ENCODE measurements at regions of chr1 and their contacts with region 1.

Region 1: GRCh38 chr1:112803906-112804762 is 89.0 kb upstream of the PPM1J start:
- DNase-seq: peak; percentile 78
- H3K4me3 Mint-ChIP-seq: no peak overlapping the region
- H3K27ac Mint-ChIP-seq: no peak overlapping the region
- H3K4me1 Mint-ChIP-seq: peaks cover 3% of the 10 kb centered on the region
- H3K27me3 Mint-ChIP-seq: no peaks in the 10 kb centered on the region
- CTCF ChIP-seq: peak; percentile 84

Region 2: DNA sequence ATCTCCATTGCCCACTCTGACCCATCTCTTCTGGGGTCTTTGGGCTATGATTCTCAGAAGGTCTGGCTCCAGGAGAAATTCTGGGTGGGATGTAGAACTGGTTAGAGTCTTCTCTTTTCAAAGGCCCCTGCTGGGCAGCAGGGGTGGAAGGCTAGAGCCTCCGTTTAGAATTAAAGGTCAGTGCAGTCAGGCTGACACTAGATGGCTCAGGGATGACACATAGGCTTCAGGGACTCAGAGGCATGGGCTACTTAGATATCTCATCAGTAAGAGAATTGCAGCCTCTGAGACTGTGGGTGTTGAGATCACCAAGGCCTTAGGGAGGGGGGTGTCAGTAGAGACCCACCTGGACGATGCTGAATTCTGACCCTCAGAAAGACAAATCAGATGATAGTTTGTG is 76.4 kb before region 1 on chr1:
- CTCF ChIA-PET with region 1: interaction called, 838 read pairs
- POLR2A ChIA-PET with region 1: interaction called, 3 read pairs
- intact Hi-C with region 1: no loop called
- DNase-seq: no peak
- H3K4me3 Mint-ChIP-seq: no peak overlapping the region
- H3K27ac Mint-ChIP-seq: no peak overlapping the region
- H3K4me1 Mint-ChIP-seq: no peaks in the 10 kb centered on the region
- H3K27me3 Mint-ChIP-seq: no peaks in the 10 kb centered on the region
- CTCF ChIP-seq: no peak

Region 3: DNA sequence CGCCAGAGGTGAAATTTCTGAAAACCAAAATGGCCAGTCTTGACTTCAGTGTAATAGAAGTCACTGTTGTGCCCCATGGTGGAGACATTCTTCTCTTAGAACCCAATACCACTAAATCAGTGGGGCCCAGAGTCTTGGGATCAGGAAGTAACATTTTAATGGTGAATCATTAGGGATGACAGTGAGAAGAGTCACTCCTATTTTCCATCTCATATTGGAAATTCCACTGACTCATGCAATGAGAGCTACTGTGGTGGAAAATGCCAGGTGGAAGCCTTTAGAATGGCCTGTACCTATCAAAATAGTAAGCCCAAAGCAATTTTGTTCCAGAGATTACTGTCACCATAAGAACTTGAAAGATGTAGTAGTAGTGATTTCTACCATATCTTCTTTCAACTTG is 68.4 kb before region 1 on chr1:
- CTCF ChIA-PET with region 1: interaction called, 36 read pairs
- POLR2A ChIA-PET with region 1: interaction called, 3 read pairs
- intact Hi-C with region 1: no loop called
- DNase-seq: peak; percentile 64
- H3K4me3 Mint-ChIP-seq: no peak overlapping the region
- H3K27ac Mint-ChIP-seq: peak overlapping the region; percentile 49
- H3K4me1 Mint-ChIP-seq: no peaks in the 10 kb centered on the region
- H3K27me3 Mint-ChIP-seq: no peaks in the 10 kb centered on the region
- CTCF ChIP-seq: no peak

Region 4: GRCh38 chr1:112762541-112763517 is 41.3 kb before region 1 on chr1:
- CTCF ChIA-PET with region 1: interaction called, 33 read pairs
- POLR2A ChIA-PET with region 1: interaction called, 3 read pairs
- intact Hi-C with region 1: no loop called
- DNase-seq: peak; percentile 56
- H3K4me3 Mint-ChIP-seq: peak overlapping the region; percentile 41
- H3K27ac Mint-ChIP-seq: peak overlapping the region; percentile 82
- H3K4me1 Mint-ChIP-seq: peaks cover 32% of the 10 kb centered on the region
- H3K27me3 Mint-ChIP-seq: no peaks in the 10 kb centered on the region
- CTCF ChIP-seq: no peak

Region 5: DNA sequence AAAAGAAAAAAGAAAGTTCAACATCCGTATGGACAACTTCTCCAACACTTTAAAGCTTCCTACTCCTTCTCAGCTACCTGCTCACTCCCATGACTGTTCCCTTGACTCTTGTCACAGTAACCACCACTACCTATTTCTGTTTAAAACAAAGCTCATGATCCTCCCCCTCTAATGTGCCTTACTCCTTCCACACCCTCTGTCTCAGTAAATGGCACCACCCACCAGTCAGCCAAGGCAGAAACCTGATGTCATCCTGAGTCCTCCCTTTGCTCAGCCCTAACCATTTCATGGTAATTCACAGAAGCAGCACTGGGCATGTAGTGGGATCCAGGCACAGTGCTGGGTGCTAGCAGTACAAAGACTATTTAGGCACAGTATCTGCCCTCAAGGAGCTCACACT is 26.0 kb before region 1 on chr1:
- CTCF ChIA-PET with region 1: interaction called, 18 read pairs
- POLR2A ChIA-PET with region 1: no interaction called
- intact Hi-C with region 1: no loop called
- DNase-seq: no peak
- H3K4me3 Mint-ChIP-seq: no peak overlapping the region
- H3K27ac Mint-ChIP-seq: no peak overlapping the region
- H3K4me1 Mint-ChIP-seq: no peaks in the 10 kb centered on the region
- H3K27me3 Mint-ChIP-seq: no peaks in the 10 kb centered on the region
- CTCF ChIP-seq: no peak

Region 6: GRCh38 chr1:112788561-112788960 is 15.6 kb before region 1 on chr1:
- CTCF ChIA-PET with region 1: interaction called, 13 read pairs
- POLR2A ChIA-PET with region 1: no interaction called
- intact Hi-C with region 1: no loop called
- DNase-seq: peak; percentile 19
- H3K4me3 Mint-ChIP-seq: no peak overlapping the region
- H3K27ac Mint-ChIP-seq: no peak overlapping the region
- H3K4me1 Mint-ChIP-seq: no peaks in the 10 kb centered on the region
- H3K27me3 Mint-ChIP-seq: no peaks in the 10 kb centered on the region
- CTCF ChIP-seq: no peak

Region 7: GRCh38 chr1:112818990-112819689 is 15.0 kb after region 1 on chr1:
- CTCF ChIA-PET with region 1: interaction called, 15 read pairs
- POLR2A ChIA-PET with region 1: no interaction called
- intact Hi-C with region 1: no loop called
- DNase-seq: no peak
- H3K4me3 Mint-ChIP-seq: no peak overlapping the region
- H3K27ac Mint-ChIP-seq: no peak overlapping the region
- H3K4me1 Mint-ChIP-seq: peaks cover 5% of the 10 kb centered on the region
- H3K27me3 Mint-ChIP-seq: no peaks in the 10 kb centered on the region
- CTCF ChIP-seq: no peak

Measured in MCF 10A (cell line).